RWPE1 (cell line): ENCODE measurements at regions of chr19 and their contacts with region 1.

Region 1: DNA sequence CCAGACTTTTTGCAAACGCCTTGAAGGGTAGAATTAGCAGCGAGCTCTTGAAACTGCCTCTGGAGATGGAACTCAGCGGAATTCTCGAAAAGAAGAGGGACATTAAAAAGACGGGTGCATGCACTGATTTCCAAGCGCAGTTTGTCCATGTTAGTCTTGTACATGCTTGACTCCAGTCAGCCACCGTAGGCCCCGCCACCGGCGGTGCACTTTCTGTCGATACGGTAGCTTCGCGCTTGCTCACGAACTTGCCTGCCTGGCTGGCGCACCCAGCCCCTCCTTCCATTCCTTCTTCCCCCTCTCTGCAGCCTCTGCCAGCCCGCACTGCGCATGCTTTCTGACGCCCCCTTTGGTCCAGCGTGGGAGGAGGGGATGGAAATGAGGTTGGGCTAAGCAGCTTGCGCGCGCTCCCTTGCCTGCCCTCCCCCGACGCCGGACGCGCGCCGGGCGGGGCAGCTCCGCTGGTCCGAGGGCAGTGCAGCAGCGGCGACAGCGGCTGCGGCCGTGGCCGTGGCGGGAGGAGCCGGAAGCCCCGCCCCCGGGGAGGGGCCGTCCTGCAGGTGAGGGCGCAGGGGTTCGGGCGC is at the start of gene ZNF575:
- DNase-seq: peak; percentile 82
- H3K27ac ChIP-seq: peak within 1 kb of the TSS; percentile 98
- CTCF ChIP-seq: no peak

Region 2: DNA sequence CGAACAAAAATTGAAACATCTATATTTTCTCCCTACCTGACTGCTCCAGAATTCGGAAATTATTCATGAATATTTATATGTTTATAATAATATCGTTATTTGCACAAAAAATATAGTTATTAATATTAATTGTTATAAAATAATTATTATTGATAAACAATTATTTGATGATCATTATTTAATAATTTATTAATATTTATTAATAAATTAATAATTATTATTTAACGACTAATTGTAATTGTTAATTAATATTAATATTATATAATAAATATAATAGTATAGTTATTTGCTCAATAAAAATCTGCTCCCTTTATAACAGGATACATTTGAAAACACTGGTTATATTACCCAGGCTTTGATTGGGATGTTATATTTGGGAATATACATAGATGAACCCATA is 1763.4 kb before region 1 on chr19:
- CTCF ChIA-PET with region 1: no interaction called
- POLR2A ChIA-PET with region 1: interaction called, 17 read pairs
- DNase-seq: no peak
- H3K27ac ChIP-seq: no peak overlapping the region
- CTCF ChIP-seq: no peak

Region 3: DNA sequence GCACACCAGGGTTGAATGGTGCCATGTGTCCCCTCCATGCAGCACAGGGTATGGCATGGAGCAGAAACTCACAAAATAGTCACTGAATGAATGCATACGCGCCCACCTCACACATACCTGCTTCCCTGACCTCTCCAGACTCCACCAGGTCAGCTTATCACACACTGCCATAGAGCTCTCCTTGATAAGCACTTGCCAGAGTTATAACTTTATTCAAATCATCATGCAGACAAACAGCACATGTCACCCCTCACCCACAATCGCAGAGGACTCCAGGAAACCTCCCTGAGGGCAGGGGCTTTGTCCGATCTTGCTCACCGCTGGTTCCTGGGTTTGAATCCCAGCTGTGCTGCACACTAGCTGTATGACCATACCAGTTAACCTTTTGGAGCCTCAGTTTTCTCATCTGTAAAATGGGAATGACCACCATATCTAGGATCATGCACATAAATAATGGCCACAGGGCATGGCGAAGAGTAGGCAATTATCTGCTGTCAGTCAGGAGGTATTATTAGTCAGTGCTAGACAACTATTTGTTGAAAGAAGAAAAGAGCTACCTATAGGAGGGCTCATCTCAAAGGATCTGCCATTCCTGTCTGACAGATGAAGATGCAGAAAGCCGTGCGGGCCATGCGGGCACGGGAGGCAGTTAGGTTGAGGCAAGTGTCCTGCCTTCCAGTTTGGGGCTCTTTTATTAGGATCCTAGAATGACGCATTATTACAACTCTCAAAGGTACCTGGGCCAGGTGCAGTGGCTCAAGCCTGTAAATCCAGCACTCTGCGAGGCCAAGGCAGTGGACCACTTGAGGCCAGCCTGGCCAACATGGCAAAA is 28.3 kb after region 1 on chr19:
- CTCF ChIA-PET with region 1: no interaction called
- POLR2A ChIA-PET with region 1: no interaction called
- DNase-seq: no peak
- H3K27ac ChIP-seq: peak overlapping the region; percentile 31; the same call in 1 of the 2 replicates
- CTCF ChIP-seq: no peak

Region 4: GRCh38 chr19:43594710-43595604 is 61.9 kb after region 1 on chr19:
- CTCF ChIA-PET with region 1: interaction called, 10 read pairs
- POLR2A ChIA-PET with region 1: interaction called, 3 read pairs
- DNase-seq: peak; percentile 36
- H3K27ac ChIP-seq: peak overlapping the region; percentile 92
- CTCF ChIP-seq: peak; percentile 85

Region 5: GRCh38 chr19:44845612-44846454 is 1312.8 kb after region 1 on chr19 and contains the start of gene NECTIN2:
- CTCF ChIA-PET with region 1: no interaction called
- POLR2A ChIA-PET with region 1: no interaction called
- DNase-seq: peak; percentile 100
- H3K27ac ChIP-seq: peak within 1 kb of the TSS; percentile 82
- CTCF ChIP-seq: no peak; the same call in none of the 2 replicates